Panc1 (cell line): ENCODE measurements at regions of chr3 and their contacts with region 1.

Region 1: DNA sequence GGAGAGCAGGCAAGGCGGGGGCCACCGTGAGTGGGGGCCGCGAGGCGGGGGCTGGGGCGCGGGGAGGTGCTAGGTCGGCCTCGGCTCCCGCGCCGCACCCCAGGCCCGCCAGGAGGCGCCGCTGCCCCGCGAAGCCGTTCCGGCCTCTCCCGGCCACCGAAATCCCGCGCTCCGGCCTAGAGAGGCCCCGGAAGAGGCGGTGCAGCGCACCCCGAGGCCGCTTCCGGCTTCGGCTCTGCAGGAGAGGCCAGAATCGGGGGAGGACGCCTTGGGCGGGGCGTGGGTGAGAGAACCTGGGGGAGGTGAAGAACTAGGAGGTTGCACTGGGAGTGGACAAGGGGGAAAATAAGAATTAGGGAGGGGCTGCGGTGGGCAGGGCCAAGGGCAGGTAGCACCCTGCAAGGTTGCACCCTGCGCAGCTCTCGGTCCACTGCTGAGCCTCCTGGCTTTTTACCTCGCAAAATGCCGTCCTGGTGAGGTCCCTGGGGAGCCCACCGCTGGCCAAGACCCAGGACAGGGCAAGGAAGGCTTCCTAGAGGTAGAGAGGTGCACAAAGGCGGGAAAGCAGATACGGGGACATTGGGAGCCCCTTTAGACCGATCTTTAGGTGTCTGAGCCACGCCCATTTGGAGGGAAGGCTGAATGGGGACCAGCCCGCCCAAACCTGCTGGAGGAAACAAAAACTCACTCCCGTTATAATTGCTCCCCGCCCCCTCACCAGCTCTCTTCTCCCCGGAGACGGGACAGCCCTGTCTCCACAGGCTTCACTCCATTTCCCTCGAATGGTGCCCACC is 8.4 kb upstream of the GNAI2 start:
- DNase-seq: no peak
- ATAC-seq: peak; percentile 93
- H3K4me3 ChIP-seq: peak overlapping the region; percentile 69 to 81
- H3K27ac ChIP-seq: peak overlapping the region; percentile 87
- H3K4me1 ChIP-seq: no peaks in the 10 kb centered on the region; the same call in 1 of the 2 replicates
- H3K27me3 ChIP-seq: no peaks in the 10 kb centered on the region
- CTCF ChIP-seq: peak; percentile 95

Region 2: GRCh38 chr3:49593041-49593440 is 634.5 kb before region 1 on chr3:
- CTCF ChIA-PET with region 1: no interaction called
- POLR2A ChIA-PET with region 1: no interaction called
- in situ Hi-C with region 1: no loop called
- intact Hi-C with region 1: no loop called
- DNase-seq: no peak
- ATAC-seq: 0 out of 2 replicates have a peak, but pooled peaks have one; percentile 53
- H3K4me3 ChIP-seq: no peak overlapping the region
- H3K27ac ChIP-seq: no peak overlapping the region
- H3K4me1 ChIP-seq: no peaks in the 10 kb centered on the region
- H3K27me3 ChIP-seq: no peaks in the 10 kb centered on the region
- CTCF ChIP-seq: no peak

Region 3: GRCh38 chr3:50237754-50238548 is 10.4 kb after region 1 on chr3:
- CTCF ChIA-PET with region 1: interaction called, 8 read pairs
- POLR2A ChIA-PET with region 1: interaction called, 16 read pairs
- in situ Hi-C with region 1: no loop called
- intact Hi-C with region 1: no loop called
- DNase-seq: no peak
- ATAC-seq: peak; percentile 54
- H3K4me3 ChIP-seq: peak overlapping the region; percentile 83 to 86
- H3K27ac ChIP-seq: peak overlapping the region; percentile 83
- H3K4me1 ChIP-seq: peaks cover 27% of the 10 kb centered on the region
- H3K27me3 ChIP-seq: no peaks in the 10 kb centered on the region
- CTCF ChIP-seq: no peak

Region 4: GRCh38 chr3:50260027-50260941 is 32.7 kb after region 1 on chr3:
- CTCF ChIA-PET with region 1: no interaction called
- POLR2A ChIA-PET with region 1: no interaction called
- in situ Hi-C with region 1: no loop called
- intact Hi-C with region 1: no loop called
- DNase-seq: no peak
- ATAC-seq: peak; percentile 94
- H3K4me3 ChIP-seq: peak overlapping the region; percentile 39 to 51
- H3K27ac ChIP-seq: peak overlapping the region; percentile 72
- H3K4me1 ChIP-seq: peaks cover 9% of the 10 kb centered on the region
- H3K27me3 ChIP-seq: no peaks in the 10 kb centered on the region
- CTCF ChIP-seq: peak; percentile 97

Region 5: DNA sequence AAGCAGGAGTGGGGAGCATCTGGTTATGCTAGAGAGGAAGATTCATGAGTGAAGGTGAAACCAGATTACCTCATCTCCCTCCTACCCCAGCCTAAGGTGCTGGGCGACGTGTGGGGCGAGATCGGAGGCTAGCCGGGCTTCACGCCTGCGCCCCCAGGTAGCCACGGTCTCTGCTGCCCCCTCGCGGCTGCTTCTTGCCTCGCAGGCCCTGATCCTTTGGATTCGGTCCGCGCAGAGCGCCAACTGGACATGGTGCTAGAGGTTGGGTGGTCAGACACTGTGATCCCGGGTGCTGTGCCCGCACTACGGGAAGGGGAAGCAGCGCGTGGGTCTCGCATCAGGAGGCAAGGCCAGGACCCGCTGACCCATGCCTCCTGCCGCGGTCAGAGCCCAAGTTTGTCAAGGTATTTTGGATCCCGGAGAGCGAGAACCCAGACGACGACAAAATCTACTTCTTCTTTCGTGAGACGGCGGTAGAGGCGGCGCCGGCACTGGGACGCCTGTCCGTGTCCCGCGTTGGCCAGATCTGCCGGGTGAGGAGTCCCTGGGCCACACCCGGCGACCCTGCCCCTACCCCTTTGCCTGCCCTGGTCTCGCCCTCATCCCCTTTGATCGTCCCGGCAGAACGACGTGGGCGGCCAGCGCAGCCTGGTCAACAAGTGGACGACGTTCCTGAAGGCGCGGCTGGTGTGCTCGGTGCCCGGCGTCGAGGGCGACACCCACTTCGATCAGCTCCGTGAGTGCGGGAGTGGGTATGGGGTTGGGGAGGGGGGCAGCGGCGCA is 45.5 kb after region 1 on chr3:
- CTCF ChIA-PET with region 1: interaction called, 8 read pairs
- POLR2A ChIA-PET with region 1: no interaction called
- in situ Hi-C with region 1: no loop called
- intact Hi-C with region 1: loop called (anchors 2 kb)
- DNase-seq: no peak
- ATAC-seq: peak; percentile 86
- H3K4me3 ChIP-seq: peak overlapping the region; percentile 27 to 56
- H3K27ac ChIP-seq: no peak overlapping the region
- H3K4me1 ChIP-seq: peaks cover 8% of the 10 kb centered on the region
- H3K27me3 ChIP-seq: no peaks in the 10 kb centered on the region
- CTCF ChIP-seq: peak; percentile 88